Left lung (tissue), 14 donors: ENCODE measurements at regions of chr15 and their contacts with region 1.

Region 1: DNA sequence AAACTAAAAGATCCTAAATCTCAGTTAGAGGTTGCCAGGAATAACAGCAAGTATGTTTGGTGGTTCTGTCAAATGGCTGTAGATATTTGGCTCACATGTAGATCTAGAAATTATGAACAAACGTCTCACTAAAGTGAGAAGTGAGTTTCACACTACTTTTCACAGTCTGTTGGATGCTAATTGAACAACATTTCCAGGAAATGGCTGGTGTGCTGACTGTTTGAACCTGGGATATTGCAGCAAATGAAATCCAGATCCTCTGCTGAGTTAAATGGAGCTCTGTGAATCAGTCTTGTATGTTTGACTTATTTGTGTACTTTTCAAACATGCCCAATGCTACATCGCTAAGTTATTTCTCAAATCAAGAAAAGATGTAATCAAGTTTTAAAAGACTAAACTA is 21.3 kb upstream of the RSL24D1 start:
- DNase-seq: no peak
- ATAC-seq: no peak
- H3K4me3 ChIP-seq: no peak overlapping the region
- H3K27ac ChIP-seq: peak overlapping the region; percentile 61 to 93
- H3K4me1 ChIP-seq: peaks cover 17 to 60% of the 10 kb centered on the region in 2 donors
- H3K27me3 ChIP-seq: no peaks in the 10 kb centered on the region
- CTCF ChIP-seq: no peak

Region 2: DNA sequence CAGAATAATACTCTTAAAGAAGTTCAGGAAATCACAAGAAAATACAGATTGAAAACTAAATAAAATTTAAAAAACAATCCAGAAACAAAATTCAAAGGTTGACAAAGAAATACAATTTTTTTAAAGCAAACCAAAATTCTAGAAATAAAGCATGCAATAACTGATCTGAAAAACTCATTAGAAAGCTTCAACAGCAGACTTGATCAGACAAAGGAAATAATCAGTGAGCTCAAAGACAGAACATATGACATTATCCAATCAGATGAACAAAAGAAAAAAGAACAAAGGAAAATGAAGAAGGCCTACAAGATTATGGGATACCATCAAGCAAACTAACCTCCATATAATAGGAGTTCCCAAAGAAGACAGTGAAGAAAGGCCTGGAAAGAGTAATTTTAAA is 358.1 kb before region 1 on chr15:
- intact Hi-C with region 1: no loop called
- DNase-seq: no peak
- ATAC-seq: no peak
- H3K4me3 ChIP-seq: no peak overlapping the region
- H3K27ac ChIP-seq: no peak overlapping the region
- H3K4me1 ChIP-seq: no peaks in the 10 kb centered on the region
- H3K27me3 ChIP-seq: no peaks in the 10 kb centered on the region
- CTCF ChIP-seq: no peak

Region 3: GRCh38 chr15:54884312-54884711 is 333.7 kb before region 1 on chr15:
- intact Hi-C with region 1: no loop called
- DNase-seq: no peak
- ATAC-seq: no peak
- H3K4me3 ChIP-seq: no peak overlapping the region
- H3K27ac ChIP-seq: peak overlapping the region in 1 of 2 donors; percentile 55
- H3K4me1 ChIP-seq: no peaks in the 10 kb centered on the region
- H3K27me3 ChIP-seq: no peaks in the 10 kb centered on the region
- CTCF ChIP-seq: no peak

Region 4: DNA sequence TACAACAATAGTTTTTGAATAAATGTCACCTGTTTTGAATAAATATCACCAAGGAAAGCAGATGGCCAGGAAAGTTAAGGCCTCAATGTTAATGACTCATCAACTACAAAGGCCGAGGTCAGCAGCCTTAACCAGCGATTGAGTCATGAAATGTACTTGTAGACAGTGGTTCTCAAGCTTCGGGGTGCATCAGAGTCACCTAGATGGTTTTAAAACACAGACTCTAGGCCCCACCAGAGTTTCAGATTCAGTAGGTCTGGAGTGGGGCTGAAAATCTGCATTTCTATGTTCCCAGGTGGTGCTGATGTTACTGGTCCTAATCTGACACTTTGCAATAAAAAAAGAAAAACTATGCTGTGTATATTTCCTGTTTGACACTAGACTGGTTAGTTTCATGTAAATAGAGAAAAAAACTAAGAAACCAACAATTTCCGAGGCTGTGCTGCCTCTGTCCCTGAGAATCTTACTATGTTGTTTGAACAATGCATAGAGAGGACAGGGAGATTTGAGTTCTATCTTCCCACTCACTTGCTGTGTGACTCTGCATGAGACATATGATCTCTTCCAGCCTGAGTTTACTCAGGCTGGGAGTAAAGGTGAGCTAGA is 61.8 kb after region 1 on chr15:
- intact Hi-C with region 1: no loop called
- DNase-seq: no peak
- ATAC-seq: peak; percentile 53
- H3K4me3 ChIP-seq: no peak overlapping the region
- H3K27ac ChIP-seq: peak overlapping the region; percentile 55 to 82
- H3K4me1 ChIP-seq: peaks cover 34 to 98% of the 10 kb centered on the region in 2 donors
- H3K27me3 ChIP-seq: no peaks in the 10 kb centered on the region
- CTCF ChIP-seq: no peak

Region 5: GRCh38 chr15:55290528-55291057 is 72.5 kb after region 1 on chr15:
- intact Hi-C with region 1: loop called in 1 of 2 experiments (anchors 5 kb)
- DNase-seq: peak in 3 of 4 donors; percentile 88 to 97 (median 88)
- ATAC-seq: peak; percentile 83
- H3K4me3 ChIP-seq: peak overlapping the region; percentile 83 to 91
- H3K27ac ChIP-seq: peak overlapping the region; percentile 96 to 99
- H3K4me1 ChIP-seq: peaks cover 0 to 46% of the 10 kb centered on the region in 2 donors
- H3K27me3 ChIP-seq: no peaks in the 10 kb centered on the region
- CTCF ChIP-seq: peak; percentile 80 to 87

Region 6: GRCh38 chr15:55434989-55435825 is 217.2 kb after region 1 on chr15:
- intact Hi-C with region 1: loop called in 1 of 2 experiments (anchors 10 kb)
- DNase-seq: peak in 1 of 4 donors; percentile 39
- ATAC-seq: peak; percentile 88
- H3K4me3 ChIP-seq: no peak overlapping the region
- H3K27ac ChIP-seq: no peak overlapping the region
- H3K4me1 ChIP-seq: no peaks in the 10 kb centered on the region
- H3K27me3 ChIP-seq: no peaks in the 10 kb centered on the region
- CTCF ChIP-seq: peak; percentile 54 to 55